Heart left ventricle (tissue), 16 donors: ENCODE measurements at regions of chr4 and their contacts with region 1.

Region 1: DNA sequence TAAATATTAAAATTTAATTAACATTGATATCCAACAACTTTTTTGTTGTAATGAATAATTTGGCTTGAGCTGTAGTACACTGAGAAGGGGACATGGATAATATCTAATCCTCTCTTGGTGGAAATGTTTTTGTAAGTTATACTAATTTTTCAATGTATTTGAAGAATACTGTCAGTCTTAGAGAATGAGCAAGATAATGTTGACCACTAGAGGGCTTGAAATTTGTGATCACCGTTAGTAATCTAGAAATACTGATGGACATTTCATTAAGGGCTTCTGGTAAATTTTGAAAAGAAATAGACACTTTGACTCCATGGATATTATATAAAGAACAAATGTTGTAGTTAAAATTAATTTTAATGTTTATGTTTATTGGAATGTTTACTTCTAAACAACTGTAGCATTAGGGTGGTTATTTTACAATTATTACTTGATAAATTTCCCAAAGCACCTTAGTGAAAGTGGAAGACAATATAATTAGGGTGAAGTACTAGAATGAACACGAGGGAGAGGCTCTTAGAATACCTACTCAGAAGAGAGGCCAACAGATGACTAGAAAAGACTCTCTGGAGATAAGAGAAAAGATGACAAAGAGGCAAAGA is 20.0 kb upstream of the CAMK2D start:
- DNase-seq: no peak
- ATAC-seq: peak in 1 of 4 donors; percentile 32
- H3K4me3 ChIP-seq: no peak overlapping the region
- H3K27ac ChIP-seq: no peak overlapping the region
- H3K4me1 ChIP-seq: peaks cover 0 to 28% (median 0%) of the 10 kb centered on the region in 12 donors
- H3K27me3 ChIP-seq: no peaks in the 10 kb centered on the region
- CTCF ChIP-seq: peak; percentile 55 to 78 (median 71)
- POLR2A ChIP-seq: no peak

Region 2: DNA sequence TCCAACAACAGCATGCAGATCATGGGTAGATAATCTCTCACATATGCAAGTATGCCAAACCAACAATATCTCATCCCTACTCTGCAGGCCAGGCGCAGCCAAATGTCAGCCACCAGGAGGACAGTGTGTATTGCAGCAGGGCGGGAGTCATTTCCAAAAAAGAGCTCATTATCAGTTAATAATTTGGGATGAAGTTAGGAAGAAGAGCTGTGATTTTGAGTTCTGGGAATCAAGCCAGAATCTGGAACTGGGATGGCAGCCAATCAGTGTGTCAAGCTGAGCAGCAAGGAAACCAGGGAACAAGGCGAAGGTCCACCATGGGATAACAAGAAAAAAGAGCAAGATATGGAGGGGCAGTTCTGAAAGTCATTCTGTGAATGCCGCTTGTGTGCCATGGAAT is 68.2 kb after region 1 on chr4:
- intact Hi-C with region 1: loop called in 1 of 10 experiments (anchors 10 kb)
- DNase-seq: peak in 4 of 5 donors; percentile 20 to 55 (median 36)
- ATAC-seq: peak in 3 of 4 donors; percentile 47 to 64 (median 56)
- H3K4me3 ChIP-seq: no peak overlapping the region
- H3K27ac ChIP-seq: no peak overlapping the region
- H3K4me1 ChIP-seq: peaks cover 0 to 22% (median 0%) of the 10 kb centered on the region in 12 donors
- H3K27me3 ChIP-seq: no peaks in the 10 kb centered on the region
- CTCF ChIP-seq: peak in 1 of 12 donors; percentile 12
- POLR2A ChIP-seq: no peak

Region 3: GRCh38 chr4:113884655-113885054 is 103.1 kb after region 1 on chr4:
- intact Hi-C with region 1: loop called in 1 of 10 experiments (anchors 5 kb)
- DNase-seq: no peak
- ATAC-seq: no peak
- H3K4me3 ChIP-seq: no peak overlapping the region
- H3K27ac ChIP-seq: no peak overlapping the region
- H3K4me1 ChIP-seq: peaks cover 0 to 6% (median 0%) of the 10 kb centered on the region in 12 donors
- H3K27me3 ChIP-seq: no peaks in the 10 kb centered on the region
- CTCF ChIP-seq: no peak
- POLR2A ChIP-seq: no peak

Region 4: DNA sequence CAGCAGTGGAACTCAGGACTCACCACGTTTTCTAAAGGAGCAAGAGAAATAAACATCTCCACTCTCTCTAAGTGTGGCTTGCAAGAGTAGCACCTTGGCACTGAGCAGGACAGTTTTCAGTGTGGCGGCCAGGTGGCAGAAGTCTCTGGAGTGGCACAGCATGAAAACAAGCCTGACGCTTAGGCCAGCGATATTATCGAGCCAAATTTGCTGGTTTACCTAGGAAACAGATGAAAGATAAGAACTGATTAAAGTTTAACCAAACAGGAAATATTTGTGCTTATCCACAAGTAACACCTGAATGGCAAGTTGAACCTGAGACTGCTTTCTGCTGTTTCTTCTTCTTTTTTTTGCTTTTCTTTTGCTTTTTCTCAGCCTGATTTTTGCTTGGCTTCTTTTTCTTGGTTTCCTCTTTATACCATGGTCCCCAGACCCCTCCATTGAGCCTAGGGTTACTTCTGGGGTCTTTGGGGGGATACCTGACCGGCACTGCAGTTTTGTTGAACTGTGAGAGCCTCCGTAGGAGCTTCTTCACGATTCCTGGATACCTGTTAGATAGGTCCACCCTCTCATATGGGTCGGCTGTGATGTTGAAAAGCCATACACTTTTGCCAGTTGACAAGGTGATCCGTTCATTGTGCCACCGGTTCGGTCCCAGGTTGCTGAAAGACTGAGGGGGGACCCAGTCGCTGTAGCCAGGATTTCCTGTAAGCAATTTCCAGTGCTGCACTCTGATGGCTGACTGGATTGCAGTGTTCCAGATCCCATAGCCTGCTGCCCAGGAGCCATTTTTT is 120.7 kb after region 1 on chr4:
- intact Hi-C with region 1: loop called in 5 of 10 experiments (anchors 5 to 10 kb)
- DNase-seq: no peak
- ATAC-seq: no peak
- H3K4me3 ChIP-seq: no peak overlapping the region
- H3K27ac ChIP-seq: no peak overlapping the region
- H3K4me1 ChIP-seq: peaks cover 0 to 7% (median 0%) of the 10 kb centered on the region in 12 donors
- H3K27me3 ChIP-seq: no peaks in the 10 kb centered on the region
- CTCF ChIP-seq: no peak
- POLR2A ChIP-seq: no peak

Region 5: GRCh38 chr4:114077610-114078009 is 296.1 kb after region 1 on chr4:
- intact Hi-C with region 1: loop called in 6 of 10 experiments (anchors 10 kb)
- DNase-seq: no peak
- ATAC-seq: no peak
- H3K4me3 ChIP-seq: no peak overlapping the region
- H3K27ac ChIP-seq: no peak overlapping the region
- H3K4me1 ChIP-seq: no peaks in the 10 kb centered on the region
- H3K27me3 ChIP-seq: no peaks in the 10 kb centered on the region
- CTCF ChIP-seq: no peak
- POLR2A ChIP-seq: no peak

Region 6: GRCh38 chr4:114378306-114378903 is 596.9 kb after region 1 on chr4:
- intact Hi-C with region 1: loop called in 6 of 10 experiments (anchors 5 to 10 kb)
- DNase-seq: no peak
- ATAC-seq: peak in 2 of 4 donors; percentile 31 to 48
- H3K4me3 ChIP-seq: no peak overlapping the region
- H3K27ac ChIP-seq: no peak overlapping the region
- H3K4me1 ChIP-seq: no peaks in the 10 kb centered on the region
- H3K27me3 ChIP-seq: no peaks in the 10 kb centered on the region
- CTCF ChIP-seq: peak in 10 of 12 donors; percentile 12 to 68 (median 52)
- POLR2A ChIP-seq: no peak